ENCODE measurements at regions of chr6 and their contacts with region 1.

Region 1: GRCh38 chr6:108541838-108542759 is 18.6 kb upstream of the FOXO3 start:
- DNase-seq: peak; percentile 87
- ATAC-seq: peak; percentile 86
- H3K4me3 ChIP-seq: no peak overlapping the region
- H3K27ac ChIP-seq: no peak overlapping the region
- H3K4me1 ChIP-seq: peaks cover 10% of the 10 kb centered on the region
- H3K27me3 ChIP-seq: no peaks in the 10 kb centered on the region
- CTCF ChIP-seq: peak; percentile 91
- POLR2A ChIP-seq: peak; percentile 47; the same call in 1 of the 2 replicates
- RAD21 ChIP-seq: peak; percentile 100

Region 2: DNA sequence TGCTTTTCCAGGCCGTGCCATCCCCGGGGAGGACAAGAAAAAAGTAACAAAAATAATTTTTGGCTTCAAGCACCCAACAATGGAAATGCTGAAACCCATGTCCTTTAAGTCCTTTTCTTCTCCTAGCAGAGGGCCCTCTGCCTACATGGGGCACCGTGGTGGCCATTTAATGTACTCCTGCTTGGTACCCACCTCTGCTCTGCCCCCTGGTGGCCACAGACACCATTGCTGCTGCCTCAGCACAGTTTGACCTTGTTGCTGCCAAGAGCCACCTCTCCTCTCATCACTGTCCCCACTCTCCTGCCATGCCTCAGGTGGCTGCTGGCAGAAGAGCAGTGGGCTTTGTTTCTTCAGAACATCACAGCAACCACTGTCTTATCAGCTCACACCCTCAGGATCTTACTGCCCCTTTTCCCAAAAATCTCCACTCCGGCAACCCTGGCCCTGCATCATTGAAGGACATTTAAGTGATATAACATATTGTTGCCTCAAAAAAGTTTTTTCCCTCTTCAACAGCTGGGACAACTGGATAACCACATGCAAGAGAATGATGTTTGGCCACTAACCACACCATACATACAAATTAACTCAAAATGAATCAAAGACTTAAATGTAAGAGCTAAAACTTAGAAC is 293.2 kb after region 1 on chr6:
- CTCF ChIA-PET with region 1: interaction called, 6 read pairs
- POLR2A ChIA-PET with region 1: no interaction called
- dilution Hi-C with region 1: no loop called
- in situ Hi-C with region 1: loop called (anchors 5 kb)
- intact Hi-C with region 1: loop called (anchors 1 kb)
- DNase-seq: peak; percentile 72
- ATAC-seq: peak; percentile 90
- H3K4me3 ChIP-seq: no peak overlapping the region
- H3K27ac ChIP-seq: no peak overlapping the region
- H3K4me1 ChIP-seq: peaks cover 6% of the 10 kb centered on the region; the same call in 1 of the 2 replicates
- H3K27me3 ChIP-seq: no peaks in the 10 kb centered on the region; the same call in 1 of the 2 replicates
- CTCF ChIP-seq: peak; percentile 76
- POLR2A ChIP-seq: no peak
- RAD21 ChIP-seq: peak; percentile 80

Region 3: GRCh38 chr6:108896111-108896661 is 354.1 kb after region 1 on chr6:
- CTCF ChIA-PET with region 1: interaction called, 24 read pairs
- POLR2A ChIA-PET with region 1: no interaction called
- dilution Hi-C with region 1: no loop called
- in situ Hi-C with region 1: loop called (anchors 5 kb)
- intact Hi-C with region 1: loop called (anchors 1 kb)
- DNase-seq: peak; percentile 92
- ATAC-seq: peak; percentile 83
- H3K4me3 ChIP-seq: no peak overlapping the region
- H3K27ac ChIP-seq: peak overlapping the region; percentile 98
- H3K4me1 ChIP-seq: peaks cover 13% of the 10 kb centered on the region
- H3K27me3 ChIP-seq: no peaks in the 10 kb centered on the region
- CTCF ChIP-seq: no peak
- POLR2A ChIP-seq: no peak
- RAD21 ChIP-seq: no peak

Region 4: GRCh38 chr6:109009236-109009961 is 467.3 kb after region 1 on chr6:
- CTCF ChIA-PET with region 1: no interaction called
- POLR2A ChIA-PET with region 1: no interaction called
- dilution Hi-C with region 1: no loop called
- in situ Hi-C with region 1: no loop called
- intact Hi-C with region 1: loop called (anchors 5 kb)
- DNase-seq: peak; percentile 82
- ATAC-seq: peak; percentile 100
- H3K4me3 ChIP-seq: peak overlapping the region; percentile 91
- H3K27ac ChIP-seq: peak overlapping the region; percentile 79
- H3K4me1 ChIP-seq: no peaks in the 10 kb centered on the region
- H3K27me3 ChIP-seq: no peaks in the 10 kb centered on the region
- CTCF ChIP-seq: no peak
- POLR2A ChIP-seq: no peak
- RAD21 ChIP-seq: no peak